T-cell (primary cell): ENCODE measurements at regions of chr11 and their contacts with region 1.

Region 1: GRCh38 chr11:76919887-76920746 is 59.4 kb downstream of the ACER3 start:
- DNase-seq: peak in 34 of 35 experiments; percentile 12 to 85 (median 43)
- ATAC-seq: peak; percentile 67 to 73 (median 71)
- H3K4me3 ChIP-seq: peak overlapping the region; percentile 15 to 42
- H3K4me3 Mint-ChIP-seq: peak overlapping the region; percentile 49 to 54 (median 52)
- H3K27ac ChIP-seq: no peak overlapping the region
- H3K27ac Mint-ChIP-seq: no peak overlapping the region
- H3K4me1 ChIP-seq: peaks cover 0 to 4% of the 10 kb centered on the region in 2 experiments
- H3K4me1 Mint-ChIP-seq: peaks cover 10 to 14% (median 11%) of the 10 kb centered on the region in 3 donors
- H3K27me3 ChIP-seq: no peaks in the 10 kb centered on the region
- H3K27me3 Mint-ChIP-seq: no peaks in the 10 kb centered on the region

Region 2: DNA sequence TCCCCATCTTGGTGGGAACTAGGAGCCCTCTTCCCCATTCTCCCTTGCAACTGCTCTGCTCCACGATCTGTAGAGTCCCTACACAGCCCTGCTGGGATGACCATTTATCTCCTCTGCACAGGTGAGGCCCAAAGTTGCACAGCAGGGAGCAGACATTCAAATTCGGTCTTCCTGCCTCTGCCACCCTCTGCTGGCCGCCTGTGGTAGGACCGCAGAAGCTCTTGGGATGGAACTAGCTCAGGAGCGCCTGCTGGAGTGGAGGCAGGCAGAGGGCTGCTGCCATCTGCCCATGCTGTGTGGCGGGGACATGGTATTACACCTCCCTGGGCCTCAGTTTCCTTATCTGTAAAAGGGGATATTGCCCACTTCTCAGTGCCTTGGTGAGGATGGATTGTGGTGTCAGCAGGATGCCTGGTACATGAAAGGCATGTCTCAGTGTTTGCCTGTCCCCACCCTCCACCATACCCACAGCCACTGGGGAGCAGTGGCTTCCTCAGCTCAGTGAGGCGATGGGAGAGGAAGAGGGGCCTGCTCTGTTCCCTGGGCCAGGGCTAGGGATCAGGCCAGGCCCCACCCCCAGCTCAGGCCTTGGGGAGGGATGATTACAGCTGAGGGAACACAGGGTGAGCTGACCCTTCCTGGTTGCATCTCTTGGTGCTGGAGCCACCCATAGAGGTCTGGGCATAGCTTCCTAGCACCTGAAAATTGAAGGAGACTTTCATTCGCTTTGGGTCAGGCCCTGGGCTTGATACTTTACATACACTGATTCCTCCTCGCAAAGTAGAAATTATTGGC is 171.2 kb after region 1 on chr11:
- CTCF ChIA-PET with region 1: interaction called, 6 to 14 read pairs
- POLR2A ChIA-PET with region 1: no interaction called
- DNase-seq: peak; percentile 55 to 85 (median 74)
- ATAC-seq: peak; percentile 91 to 99 (median 95)
- H3K4me3 ChIP-seq: no peak overlapping the region
- H3K4me3 Mint-ChIP-seq: no peak overlapping the region
- H3K27ac ChIP-seq: no peak overlapping the region
- H3K27ac Mint-ChIP-seq: peak overlapping the region in 1 of 2 donors; percentile 70
- H3K4me1 ChIP-seq: peaks cover 0 to 8% of the 10 kb centered on the region in 2 experiments
- H3K4me1 Mint-ChIP-seq: peaks cover 4 to 6% (median 4%) of the 10 kb centered on the region in 3 donors
- H3K27me3 ChIP-seq: peaks cover 0 to 5% of the 10 kb centered on the region in 2 experiments
- H3K27me3 Mint-ChIP-seq: no peaks in the 10 kb centered on the region